ENCODE measurements at regions of chr2 and their contacts with region 1.

Region 1: DNA sequence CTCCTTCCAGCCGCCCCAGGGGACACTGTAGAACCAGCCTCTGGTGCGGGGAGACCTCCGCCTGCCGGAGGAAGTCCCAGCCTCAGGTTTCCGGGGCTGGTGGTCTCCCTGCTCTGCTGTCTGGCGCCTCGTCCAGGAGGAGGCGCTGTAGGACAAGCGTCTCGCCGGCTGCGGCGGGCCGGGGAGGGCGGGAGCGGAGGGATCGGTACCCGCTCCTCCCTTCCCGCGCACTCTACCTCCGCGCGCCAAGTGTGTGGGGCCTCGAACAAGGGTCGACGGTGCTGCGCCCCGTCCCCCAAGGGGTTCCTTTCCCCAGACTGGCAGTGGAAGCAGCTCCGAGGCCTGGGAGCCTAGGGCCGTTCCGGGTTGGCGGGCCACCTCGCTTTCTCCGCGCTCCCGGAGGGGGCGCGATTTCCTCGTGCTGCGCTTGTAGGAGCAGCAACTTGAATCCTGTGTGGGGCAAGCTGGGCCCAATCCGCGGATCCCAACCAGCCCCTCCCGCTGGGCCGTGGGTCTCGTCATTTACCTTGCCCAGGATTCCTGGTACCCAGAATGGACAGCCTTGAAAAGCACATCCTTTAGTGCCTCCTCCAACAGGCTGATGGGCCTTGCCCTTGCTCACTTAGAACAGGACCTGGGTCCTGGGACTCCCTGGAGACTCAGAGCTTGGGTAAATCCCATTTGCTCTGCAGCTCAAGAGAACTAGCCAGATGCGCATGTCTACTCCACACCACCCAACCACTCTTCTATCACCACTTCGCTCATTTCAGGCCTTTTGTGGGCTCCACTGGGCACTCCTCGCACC is 10.6 kb upstream of the HOXD4 start:
- DNase-seq: peak; percentile 73 to 86 (median 84)
- H3K4me3 ChIP-seq: peak overlapping the region; percentile 16 to 75 (median 59)
- H3K27ac ChIP-seq: no peak overlapping the region
- H3K4me1 ChIP-seq: peaks cover 0 to 17% (median 13%) of the 10 kb centered on the region in 4 experiments
- H3K27me3 ChIP-seq: peaks cover 35 to 97% (median 67%) of the 10 kb centered on the region in 5 experiments

Region 2: GRCh38 chr2:176156301-176156806 is 15.6 kb after region 1 on chr2:
- CTCF ChIA-PET with region 1: interaction called, 13 read pairs
- POLR2A ChIA-PET with region 1: no interaction called
- DNase-seq: no peak
- H3K4me3 ChIP-seq: no peak overlapping the region
- H3K27ac ChIP-seq: no peak overlapping the region
- H3K4me1 ChIP-seq: peaks cover 0 to 15% (median 5%) of the 10 kb centered on the region in 4 experiments
- H3K27me3 ChIP-seq: peaks cover 14 to 100% (median 61%) of the 10 kb centered on the region in 5 experiments

Region 3: GRCh38 chr2:176454893-176455811 is 314.4 kb after region 1 on chr2:
- CTCF ChIA-PET with region 1: interaction called, 28 read pairs
- POLR2A ChIA-PET with region 1: no interaction called
- DNase-seq: peak; percentile 64 to 78 (median 67)
- H3K4me3 ChIP-seq: no peak overlapping the region
- H3K27ac ChIP-seq: no peak overlapping the region
- H3K4me1 ChIP-seq: peaks cover 0 to 3% (median 0%) of the 10 kb centered on the region in 4 experiments
- H3K27me3 ChIP-seq: peaks cover 0 to 45% (median 28%) of the 10 kb centered on the region in 5 experiments

Region 4: GRCh38 chr2:176638167-176639015 is 497.7 kb after region 1 on chr2:
- CTCF ChIA-PET with region 1: interaction called, 74 read pairs
- POLR2A ChIA-PET with region 1: no interaction called
- DNase-seq: peak; percentile 63 to 75 (median 75)
- H3K4me3 ChIP-seq: peak overlapping the region in 6 of 7 experiments; percentile 15 to 68 (median 58)
- H3K27ac ChIP-seq: no peak overlapping the region
- H3K4me1 ChIP-seq: peaks cover 0 to 12% (median 9%) of the 10 kb centered on the region in 4 experiments
- H3K27me3 ChIP-seq: peaks cover 38 to 92% (median 52%) of the 10 kb centered on the region in 5 experiments

Region 5: DNA sequence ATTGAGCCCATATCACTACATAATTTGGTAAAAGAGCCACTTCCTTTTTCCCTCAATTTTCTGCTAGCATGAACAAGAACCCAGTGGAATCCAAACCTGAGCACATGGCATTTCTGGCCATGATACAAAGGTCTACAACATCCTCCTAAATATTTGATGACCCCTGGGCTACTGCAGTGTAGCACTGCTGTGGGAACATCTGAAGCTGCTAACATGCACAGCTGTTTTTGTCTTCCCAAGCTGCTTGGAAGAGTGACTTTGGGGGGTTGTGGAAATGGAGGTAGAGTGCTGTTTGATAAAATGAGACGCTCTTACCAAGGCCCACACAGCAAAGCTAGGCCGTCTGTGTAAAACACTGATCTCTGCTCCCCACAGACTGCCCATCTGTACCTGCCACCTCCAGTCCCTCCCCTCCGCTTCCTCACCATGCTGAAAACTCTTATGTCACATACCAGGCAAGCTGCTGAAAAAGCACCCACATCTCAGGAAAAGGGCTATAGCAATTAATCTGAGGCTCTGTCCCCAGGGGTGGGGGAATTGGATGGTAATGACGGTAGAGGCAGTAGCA is 874.7 kb after region 1 on chr2:
- CTCF ChIA-PET with region 1: no interaction called
- POLR2A ChIA-PET with region 1: no interaction called
- DNase-seq: no peak
- H3K4me3 ChIP-seq: no peak overlapping the region
- H3K27ac ChIP-seq: no peak overlapping the region
- H3K4me1 ChIP-seq: peaks cover 0 to 16% (median 4%) of the 10 kb centered on the region in 4 experiments
- H3K27me3 ChIP-seq: no peaks in the 10 kb centered on the region

Region 6: GRCh38 chr2:177148477-177149154 is 1007.9 kb after region 1 on chr2:
- CTCF ChIA-PET with region 1: interaction called, 12 read pairs
- POLR2A ChIA-PET with region 1: no interaction called
- DNase-seq: peak; percentile 73 to 88 (median 80)
- H3K4me3 ChIP-seq: peak overlapping the region in 6 of 7 experiments; percentile 63 to 76 (median 66)
- H3K27ac ChIP-seq: no peak overlapping the region
- H3K4me1 ChIP-seq: peaks cover under 1 to 13% (median 9%) of the 10 kb centered on the region in 4 experiments
- H3K27me3 ChIP-seq: peaks cover 0 to 25% (median 9%) of the 10 kb centered on the region in 5 experiments

Measured in common myeloid progenitor, CD34-positive (primary cell).